ENCODE measurements at regions of chr5 and their contacts with region 1.

Region 1: GRCh38 chr5:170338933-170339779 is 41.6 kb upstream of the LCP2 start:
- DNase-seq: peak; percentile 64 to 72 (median 70)
- H3K4me3 ChIP-seq: no peak overlapping the region
- H3K4me3 Mint-ChIP-seq: no peak overlapping the region
- H3K27ac ChIP-seq: peak overlapping the region; percentile 8
- H3K27ac Mint-ChIP-seq: peak overlapping the region in 5 of 7 donors; percentile 45 to 89 (median 56)
- H3K4me1 ChIP-seq: peaks cover 51% of the 10 kb centered on the region
- H3K4me1 Mint-ChIP-seq: peaks cover 0 to 39% (median 27%) of the 10 kb centered on the region in 4 donors
- H3K27me3 ChIP-seq: no peaks in the 10 kb centered on the region
- H3K27me3 Mint-ChIP-seq: no peaks in the 10 kb centered on the region

Region 2: GRCh38 chr5:169946743-169947295 is 392.3 kb before region 1 on chr5:
- CTCF ChIA-PET with region 1: no interaction called
- POLR2A ChIA-PET with region 1: no interaction called
- intact Hi-C with region 1: no loop called
- DNase-seq: no peak
- H3K4me3 ChIP-seq: no peak overlapping the region
- H3K4me3 Mint-ChIP-seq: no peak overlapping the region
- H3K27ac ChIP-seq: no peak overlapping the region
- H3K27ac Mint-ChIP-seq: peak overlapping the region in 2 of 7 donors; percentile 46 to 75
- H3K4me1 ChIP-seq: no peaks in the 10 kb centered on the region
- H3K4me1 Mint-ChIP-seq: peaks cover 9 to 28% (median 18%) of the 10 kb centered on the region in 4 donors
- H3K27me3 ChIP-seq: no peaks in the 10 kb centered on the region
- H3K27me3 Mint-ChIP-seq: no peaks in the 10 kb centered on the region

Region 3: DNA sequence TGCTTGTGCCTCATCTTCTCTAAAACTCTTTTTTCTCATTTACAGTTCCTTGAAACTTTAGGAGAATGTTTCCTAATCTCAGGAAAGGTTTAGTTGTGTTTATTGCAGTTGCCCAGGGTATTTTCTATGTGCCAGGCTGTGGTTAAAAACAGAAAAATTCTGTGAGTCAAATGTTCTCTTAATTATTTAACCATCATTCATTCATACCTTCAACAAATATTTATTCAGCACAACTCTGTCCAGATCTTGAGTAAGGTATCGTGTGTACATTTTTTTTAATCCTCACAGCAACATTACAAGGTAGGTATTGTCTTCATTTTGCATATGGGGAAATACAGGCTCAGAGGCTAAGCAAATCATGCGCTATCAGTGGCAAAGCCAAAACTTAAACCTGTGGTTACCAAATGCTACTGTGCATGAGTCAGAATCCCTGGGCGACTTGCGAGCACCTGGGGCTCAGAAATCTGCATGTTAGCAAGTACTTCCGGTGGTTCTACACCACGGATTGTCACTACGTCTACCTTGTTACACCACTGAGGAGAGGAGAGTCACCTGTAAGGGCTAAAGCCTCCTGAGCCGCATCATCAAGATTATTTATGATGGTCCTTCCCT is 85.2 kb before region 1 on chr5:
- CTCF ChIA-PET with region 1: interaction called, 61 read pairs
- POLR2A ChIA-PET with region 1: interaction called, 4 read pairs
- intact Hi-C with region 1: loop called (anchors 1 kb)
- DNase-seq: peak; percentile 72 to 93 (median 79)
- H3K4me3 ChIP-seq: no peak overlapping the region
- H3K4me3 Mint-ChIP-seq: peak overlapping the region in 7 of 8 donors; percentile 2 to 78 (median 11)
- H3K27ac ChIP-seq: peak overlapping the region; percentile 60
- H3K27ac Mint-ChIP-seq: peak overlapping the region; percentile 82 to 97 (median 92)
- H3K4me1 ChIP-seq: peaks cover 51% of the 10 kb centered on the region
- H3K4me1 Mint-ChIP-seq: peaks cover 27 to 59% (median 42%) of the 10 kb centered on the region in 4 donors
- H3K27me3 ChIP-seq: no peaks in the 10 kb centered on the region
- H3K27me3 Mint-ChIP-seq: no peaks in the 10 kb centered on the region

Region 4: GRCh38 chr5:170267431-170268152 is 71.6 kb before region 1 on chr5:
- CTCF ChIA-PET with region 1: interaction called, 200 read pairs
- POLR2A ChIA-PET with region 1: interaction called, 255 read pairs
- intact Hi-C with region 1: loop called (anchors 1 kb)
- DNase-seq: peak; percentile 80 to 83 (median 82)
- H3K4me3 ChIP-seq: peak overlapping the region in 1 of 2 donors; percentile 33
- H3K4me3 Mint-ChIP-seq: peak overlapping the region; percentile 41 to 86 (median 75)
- H3K27ac ChIP-seq: peak overlapping the region; percentile 66
- H3K27ac Mint-ChIP-seq: peak overlapping the region; percentile 90 to 100 (median 95)
- H3K4me1 ChIP-seq: peaks cover 94% of the 10 kb centered on the region
- H3K4me1 Mint-ChIP-seq: peaks cover 67 to 92% (median 81%) of the 10 kb centered on the region in 4 donors
- H3K27me3 ChIP-seq: no peaks in the 10 kb centered on the region
- H3K27me3 Mint-ChIP-seq: no peaks in the 10 kb centered on the region

Region 5: DNA sequence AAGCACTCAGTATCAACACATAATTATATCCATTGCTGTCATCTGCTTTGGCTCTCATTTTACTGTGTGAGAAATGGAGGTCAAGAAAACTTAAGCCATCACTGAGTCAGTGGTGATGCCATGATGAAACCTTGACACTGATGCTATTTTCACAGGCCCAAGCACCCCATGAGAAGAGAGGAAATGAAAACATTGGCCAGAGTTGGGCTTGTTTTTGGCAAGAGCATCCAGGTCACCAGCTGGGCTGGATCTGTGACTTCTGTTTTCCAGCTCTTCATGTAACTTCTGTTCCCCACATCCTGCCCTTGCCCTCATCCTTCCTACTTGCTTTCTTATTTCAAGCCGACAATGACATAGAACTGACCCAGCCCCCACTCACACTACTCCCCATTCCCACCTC is 51.6 kb before region 1 on chr5:
- CTCF ChIA-PET with region 1: interaction called, 258 read pairs
- POLR2A ChIA-PET with region 1: interaction called, 664 read pairs
- intact Hi-C with region 1: no loop called
- DNase-seq: no peak
- H3K4me3 ChIP-seq: no peak overlapping the region
- H3K4me3 Mint-ChIP-seq: peak overlapping the region in 7 of 8 donors; percentile 22 to 99 (median 73)
- H3K27ac ChIP-seq: peak overlapping the region; percentile 49
- H3K27ac Mint-ChIP-seq: peak overlapping the region; percentile 80 to 100 (median 90)
- H3K4me1 ChIP-seq: peaks cover 99% of the 10 kb centered on the region
- H3K4me1 Mint-ChIP-seq: peaks cover 91 to 100% (median 96%) of the 10 kb centered on the region in 4 donors
- H3K27me3 ChIP-seq: no peaks in the 10 kb centered on the region
- H3K27me3 Mint-ChIP-seq: no peaks in the 10 kb centered on the region

Region 6: DNA sequence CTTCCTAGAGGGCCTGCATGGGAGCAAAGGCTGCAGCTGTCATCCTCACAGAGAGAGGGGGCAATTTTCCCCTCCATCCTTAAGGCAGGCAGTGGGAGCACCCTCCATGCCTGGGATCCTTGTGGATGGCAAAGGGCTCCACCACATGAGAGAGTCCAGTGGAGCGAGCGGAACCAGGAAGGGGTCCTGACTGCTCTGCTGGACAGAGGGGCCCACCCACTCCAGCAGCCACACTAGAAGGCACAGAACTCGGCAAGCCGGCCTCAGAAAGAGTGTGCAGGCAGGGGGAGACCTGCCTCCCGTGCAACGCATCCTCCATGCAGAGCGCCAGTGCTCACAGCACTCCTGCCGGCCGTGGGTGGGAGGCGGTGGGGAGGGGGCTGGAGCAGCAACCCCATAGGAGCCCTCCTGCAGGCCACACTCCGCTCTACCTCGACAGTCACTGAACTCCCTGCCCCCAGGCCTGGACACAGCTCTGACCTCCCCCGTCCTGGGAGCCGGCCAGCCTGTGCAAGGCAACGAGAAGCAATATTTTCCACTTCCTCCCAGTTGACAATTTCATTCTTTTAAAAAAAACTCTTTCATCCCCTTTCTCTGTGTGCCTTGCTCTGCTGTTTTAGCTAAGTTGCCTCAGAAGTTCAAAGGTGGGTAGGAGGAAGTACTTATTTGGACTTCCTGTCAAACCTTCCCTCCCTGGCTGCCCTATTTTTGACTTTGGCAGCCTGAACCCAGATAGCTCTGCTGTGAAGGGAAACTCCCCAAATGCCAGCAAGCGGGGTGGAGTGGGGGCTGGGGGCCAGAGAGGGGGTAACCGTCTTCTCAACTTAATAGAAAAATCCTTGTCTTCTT is 36.3 kb before region 1 on chr5:
- CTCF ChIA-PET with region 1: interaction called, 258 read pairs
- POLR2A ChIA-PET with region 1: interaction called, 664 read pairs
- intact Hi-C with region 1: no loop called
- DNase-seq: peak; percentile 85 to 91 (median 88)
- H3K4me3 ChIP-seq: peak overlapping the region; percentile 50 to 63
- H3K4me3 Mint-ChIP-seq: peak overlapping the region; percentile 77 to 97 (median 88)
- H3K27ac ChIP-seq: peak overlapping the region; percentile 82
- H3K27ac Mint-ChIP-seq: peak overlapping the region; percentile 88 to 99 (median 97)
- H3K4me1 ChIP-seq: peaks cover 69% of the 10 kb centered on the region
- H3K4me1 Mint-ChIP-seq: peaks cover 39 to 87% (median 67%) of the 10 kb centered on the region in 4 donors
- H3K27me3 ChIP-seq: no peaks in the 10 kb centered on the region
- H3K27me3 Mint-ChIP-seq: no peaks in the 10 kb centered on the region

Region 7: DNA sequence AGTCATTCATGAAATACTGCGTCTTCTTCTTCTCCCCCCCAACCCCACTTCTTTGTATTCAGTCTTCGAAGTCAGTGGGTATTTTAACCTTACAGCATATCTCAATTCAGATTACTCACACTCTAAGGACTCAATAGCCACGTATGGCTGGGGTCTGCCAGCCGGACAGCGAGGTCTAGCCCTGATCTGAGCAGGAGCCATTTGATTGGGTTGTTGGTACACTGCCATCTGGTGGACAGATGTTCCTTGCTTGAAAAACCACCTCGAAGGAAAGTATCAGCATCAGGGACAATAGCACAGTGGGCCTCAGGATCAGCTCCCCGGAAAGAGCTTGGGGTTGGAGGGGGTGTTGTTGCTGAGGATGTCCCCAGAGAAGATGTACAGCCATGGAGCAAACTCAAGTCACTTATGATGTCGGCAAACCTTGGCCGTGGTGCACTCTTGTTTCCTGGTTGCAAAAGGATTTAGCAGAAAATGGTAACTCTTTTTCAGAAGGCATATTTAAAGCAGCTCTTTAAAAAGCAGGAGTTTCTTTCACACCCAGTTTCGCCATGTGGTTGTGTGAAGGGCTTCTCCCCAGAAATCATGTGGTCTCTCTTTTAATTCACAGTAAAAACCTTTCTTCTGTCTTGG is 81.7 kb after region 1 on chr5:
- CTCF ChIA-PET with region 1: interaction called, 7 read pairs
- POLR2A ChIA-PET with region 1: interaction called, 7 read pairs
- intact Hi-C with region 1: loop called (anchors 1 kb)
- DNase-seq: peak; percentile 45 to 54 (median 53)
- H3K4me3 ChIP-seq: no peak overlapping the region
- H3K4me3 Mint-ChIP-seq: no peak overlapping the region
- H3K27ac ChIP-seq: no peak overlapping the region
- H3K27ac Mint-ChIP-seq: peak overlapping the region in 1 of 7 donors; percentile 24
- H3K4me1 ChIP-seq: peaks cover 19% of the 10 kb centered on the region
- H3K4me1 Mint-ChIP-seq: peaks cover 18 to 25% (median 23%) of the 10 kb centered on the region in 4 donors
- H3K27me3 ChIP-seq: no peaks in the 10 kb centered on the region
- H3K27me3 Mint-ChIP-seq: peaks cover 4 to 7% of the 10 kb centered on the region in 2 donors

Measured in CD4-positive, alpha-beta memory T cell (primary cell).